GM12878 (cell line): ENCODE measurements at regions of chr2 and their contacts with region 1.

Region 1: GRCh38 chr2:190319555-190320498 is at the start of gene HIBCH:
- DNase-seq: peak; percentile 81
- ATAC-seq: peak; percentile 94
- H3K4me3 ChIP-seq: peak within 1 kb of the TSS; percentile 77
- H3K27ac ChIP-seq: peak within 1 kb of the TSS; percentile 76
- H3K4me1 ChIP-seq: peaks cover 9% of the 10 kb centered on the region
- H3K27me3 ChIP-seq: no peaks in the 10 kb centered on the region
- CTCF ChIP-seq: peak; percentile 53 to 61 (median 58)
- EP300 ChIP-seq: no peak
- POLR2A ChIP-seq: peak; percentile 89
- RAD21 ChIP-seq: no peak
- polyA plus RNA-seq, gene HIBCH: 64.6 to 73.8 TPM

Region 2: GRCh38 chr2:189783927-189784867 is 535.6 kb before region 1 on chr2 and contains the starts of genes ORMDL1 and PMS1:
- CTCF ChIA-PET with region 1: no interaction called
- POLR2A ChIA-PET with region 1: no interaction called
- RAD21 ChIA-PET with region 1: no interaction called
- SMC1A ChIA-PET with region 1: no interaction called
- in situ Hi-C with region 1: no loop called
- intact Hi-C with region 1: loop called (anchors 5 kb)
- DNase-seq: peak; percentile 86
- ATAC-seq: peak; percentile 95
- H3K4me3 ChIP-seq: peak within 1 kb of the TSS; percentile 86
- H3K27ac ChIP-seq: peak within 1 kb of the TSS; percentile 92
- H3K4me1 ChIP-seq: peaks cover 4% of the 10 kb centered on the region; the same call in 1 of the 2 replicates
- H3K27me3 ChIP-seq: no peaks in the 10 kb centered on the region
- CTCF ChIP-seq: no peak
- EP300 ChIP-seq: 0 out of 4 replicates have a peak, but pooled peaks of 1 of the 2 experiments have one; percentile 27
- POLR2A ChIP-seq: peak; percentile 99
- RAD21 ChIP-seq: no peak
- polyA plus RNA-seq, gene ORMDL1: 68.9 to 89.5 TPM
- polyA plus RNA-seq, gene PMS1: 18.7 to 19.2 TPM

Region 3: DNA sequence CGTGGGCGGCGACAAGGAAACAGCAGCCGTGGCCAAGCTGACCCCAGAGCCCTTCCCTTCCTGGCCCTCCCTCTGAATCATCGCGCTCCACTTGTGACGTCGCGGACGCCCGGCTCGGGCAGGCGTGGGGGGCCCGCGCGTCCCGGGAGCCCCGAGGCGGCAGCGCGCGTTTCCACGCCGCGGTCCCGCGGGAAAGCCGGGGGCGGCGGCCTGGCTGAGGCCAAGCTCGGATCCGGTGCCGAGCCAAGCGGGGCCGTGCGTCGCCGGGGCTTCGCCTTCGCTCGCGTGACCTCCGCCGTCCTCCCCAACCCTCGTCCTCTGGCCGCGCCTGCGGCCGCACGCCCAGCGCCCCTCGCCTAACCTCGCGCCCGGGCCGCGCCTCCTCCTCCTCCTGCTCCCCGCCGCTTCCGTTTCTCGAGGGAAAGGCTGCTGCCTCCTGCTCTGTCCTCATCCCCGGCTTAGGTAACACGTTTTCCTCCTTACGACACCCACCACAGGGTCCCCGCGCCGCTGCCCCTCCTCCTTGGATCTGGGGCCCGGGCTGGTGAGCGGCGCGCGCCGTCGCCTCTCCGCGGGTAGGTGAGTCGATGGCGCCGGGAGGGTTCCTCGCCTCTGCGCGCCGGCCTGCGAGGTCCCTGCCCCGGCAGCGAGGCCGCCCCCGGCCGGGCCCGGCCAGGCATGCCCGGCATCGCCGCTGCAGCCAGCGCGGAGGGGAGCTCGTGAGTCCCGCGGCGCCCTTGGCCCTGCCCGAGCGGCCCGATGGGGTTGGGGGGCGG is 23.9 kb after region 1 on chr2 and contains the start of gene INPP1:
- CTCF ChIA-PET with region 1: interaction called, 8 read pairs
- POLR2A ChIA-PET with region 1: interaction called, 15 read pairs
- RAD21 ChIA-PET with region 1: interaction called, 10 read pairs
- SMC1A ChIA-PET with region 1: interaction called, 16 read pairs
- in situ Hi-C with region 1: no loop called
- intact Hi-C with region 1: no loop called
- DNase-seq: no peak
- ATAC-seq: peak; percentile 83
- H3K4me3 ChIP-seq: peak within 1 kb of the TSS; percentile 77
- H3K27ac ChIP-seq: peak within 1 kb of the TSS; percentile 44; the same call in 1 of the 2 replicates
- H3K4me1 ChIP-seq: peaks cover 8% of the 10 kb centered on the region; the same call in 1 of the 2 replicates
- H3K27me3 ChIP-seq: no peaks in the 10 kb centered on the region
- CTCF ChIP-seq: no peak
- EP300 ChIP-seq: 0 out of 4 replicates have a peak, but pooled peaks of 1 of the 2 experiments have one; percentile 17
- POLR2A ChIP-seq: peak; percentile 53
- RAD21 ChIP-seq: no peak
- polyA plus RNA-seq, gene INPP1: 3.3 to 8.9 TPM

Region 4: GRCh38 chr2:190360561-190360960 is 40.7 kb after region 1 on chr2:
- CTCF ChIA-PET with region 1: interaction called, 5 read pairs
- POLR2A ChIA-PET with region 1: interaction called, 19 read pairs
- RAD21 ChIA-PET with region 1: interaction called, 4 read pairs
- SMC1A ChIA-PET with region 1: interaction called, 3 read pairs
- in situ Hi-C with region 1: no loop called
- intact Hi-C with region 1: no loop called
- DNase-seq: no peak
- ATAC-seq: no peak
- H3K4me3 ChIP-seq: no peak overlapping the region
- H3K27ac ChIP-seq: no peak overlapping the region
- H3K4me1 ChIP-seq: peaks cover 8% of the 10 kb centered on the region
- H3K27me3 ChIP-seq: no peaks in the 10 kb centered on the region
- CTCF ChIP-seq: no peak
- EP300 ChIP-seq: no peak
- POLR2A ChIP-seq: no peak
- RAD21 ChIP-seq: no peak

Region 5: DNA sequence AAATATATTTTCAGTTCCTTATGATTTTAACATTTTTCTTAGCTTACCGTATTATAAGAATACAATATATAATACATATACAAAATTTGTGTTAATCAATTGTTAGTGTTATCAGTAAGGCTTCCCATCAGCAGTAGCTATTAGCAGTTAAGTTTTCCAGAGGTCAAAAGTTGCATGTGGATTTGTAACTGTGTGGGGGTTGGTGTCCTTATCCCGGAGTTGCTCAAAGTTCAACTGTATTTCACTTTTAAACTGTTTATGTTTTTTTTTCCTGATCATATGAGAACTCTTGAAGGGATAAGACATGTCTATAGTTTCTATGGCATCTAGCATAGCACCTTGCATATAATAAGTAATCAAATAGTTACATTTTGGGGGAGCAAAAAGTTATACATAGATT is 76.4 kb after region 1 on chr2:
- CTCF ChIA-PET with region 1: no interaction called
- POLR2A ChIA-PET with region 1: no interaction called
- RAD21 ChIA-PET with region 1: no interaction called
- SMC1A ChIA-PET with region 1: no interaction called
- in situ Hi-C with region 1: no loop called
- intact Hi-C with region 1: no loop called
- DNase-seq: no peak
- ATAC-seq: no peak
- H3K4me3 ChIP-seq: no peak overlapping the region
- H3K27ac ChIP-seq: no peak overlapping the region
- H3K4me1 ChIP-seq: no peaks in the 10 kb centered on the region
- H3K27me3 ChIP-seq: no peaks in the 10 kb centered on the region
- CTCF ChIP-seq: no peak
- EP300 ChIP-seq: no peak
- POLR2A ChIP-seq: no peak
- RAD21 ChIP-seq: no peak